Activated CD4-positive, alpha-beta memory T cell treated with anti-CD3 and anti-CD28 coated beads for 36 hours (primary cell): ENCODE measurements at regions of chr11 and their contacts with region 1.

Region 1: GRCh38 chr11:85854557-85855340 is 434 bp upstream of the CCDC83 start:
- DNase-seq: peak; percentile 96
- H3K4me3 Mint-ChIP-seq: peak overlapping the region; percentile 86
- H3K27ac Mint-ChIP-seq: peak overlapping the region; percentile 87
- H3K4me1 Mint-ChIP-seq: peaks cover 10% of the 10 kb centered on the region
- H3K27me3 Mint-ChIP-seq: no peaks in the 10 kb centered on the region

Region 2: DNA sequence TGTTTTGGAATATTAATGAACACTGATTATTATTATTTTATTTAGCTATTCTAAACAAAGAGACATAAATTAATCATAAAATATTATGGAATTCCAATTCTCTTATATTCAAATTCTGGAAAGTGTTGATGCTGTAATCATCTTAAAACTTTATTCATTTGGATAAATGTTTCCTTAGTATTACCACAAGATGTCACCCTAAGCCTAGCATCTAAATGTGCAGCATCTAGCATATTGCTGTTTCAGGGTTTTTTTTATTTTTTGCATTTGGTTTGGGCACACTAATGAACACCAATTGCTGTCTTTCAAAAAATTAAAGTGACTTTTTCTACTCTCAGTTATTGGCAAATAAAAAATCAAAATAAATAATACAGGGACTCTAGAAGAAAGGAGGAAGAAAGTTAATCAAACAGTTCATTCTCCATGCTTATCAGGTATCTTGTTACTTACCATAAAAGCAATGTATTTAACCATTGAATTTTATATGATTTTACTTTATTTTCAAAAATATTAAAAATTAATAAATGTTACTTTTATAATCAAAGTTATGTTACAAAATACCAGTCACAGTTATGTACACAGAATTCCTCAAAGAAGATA is 259.4 kb before region 1 on chr11:
- CTCF ChIA-PET with region 1: interaction called, 6 read pairs
- POLR2A ChIA-PET with region 1: no interaction called
- intact Hi-C with region 1: loop called (anchors 1 kb)
- DNase-seq: no peak
- H3K4me3 Mint-ChIP-seq: no peak overlapping the region
- H3K27ac Mint-ChIP-seq: no peak overlapping the region
- H3K4me1 Mint-ChIP-seq: no peaks in the 10 kb centered on the region
- H3K27me3 Mint-ChIP-seq: no peaks in the 10 kb centered on the region

Region 3: GRCh38 chr11:85826116-85826855 is 28.5 kb before region 1 on chr11:
- CTCF ChIA-PET with region 1: interaction called, 15 read pairs
- POLR2A ChIA-PET with region 1: no interaction called
- intact Hi-C with region 1: no loop called
- DNase-seq: peak; percentile 41
- H3K4me3 Mint-ChIP-seq: no peak overlapping the region
- H3K27ac Mint-ChIP-seq: peak overlapping the region; percentile 9
- H3K4me1 Mint-ChIP-seq: peaks cover 71% of the 10 kb centered on the region
- H3K27me3 Mint-ChIP-seq: no peaks in the 10 kb centered on the region

Region 4: GRCh38 chr11:85961930-85962363 is 107.2 kb after region 1 on chr11:
- CTCF ChIA-PET with region 1: interaction called, 11 read pairs
- POLR2A ChIA-PET with region 1: no interaction called
- intact Hi-C with region 1: no loop called
- DNase-seq: no peak
- H3K4me3 Mint-ChIP-seq: no peak overlapping the region
- H3K27ac Mint-ChIP-seq: no peak overlapping the region
- H3K4me1 Mint-ChIP-seq: peaks cover 11% of the 10 kb centered on the region
- H3K27me3 Mint-ChIP-seq: no peaks in the 10 kb centered on the region

Region 5: GRCh38 chr11:86418917-86419316 is 564.2 kb after region 1 on chr11:
- CTCF ChIA-PET with region 1: no interaction called
- POLR2A ChIA-PET with region 1: no interaction called
- intact Hi-C with region 1: loop called (anchors 10 kb)
- DNase-seq: peak; percentile 12
- H3K4me3 Mint-ChIP-seq: no peak overlapping the region
- H3K27ac Mint-ChIP-seq: no peak overlapping the region
- H3K4me1 Mint-ChIP-seq: peaks cover 6% of the 10 kb centered on the region
- H3K27me3 Mint-ChIP-seq: no peaks in the 10 kb centered on the region

Region 6: DNA sequence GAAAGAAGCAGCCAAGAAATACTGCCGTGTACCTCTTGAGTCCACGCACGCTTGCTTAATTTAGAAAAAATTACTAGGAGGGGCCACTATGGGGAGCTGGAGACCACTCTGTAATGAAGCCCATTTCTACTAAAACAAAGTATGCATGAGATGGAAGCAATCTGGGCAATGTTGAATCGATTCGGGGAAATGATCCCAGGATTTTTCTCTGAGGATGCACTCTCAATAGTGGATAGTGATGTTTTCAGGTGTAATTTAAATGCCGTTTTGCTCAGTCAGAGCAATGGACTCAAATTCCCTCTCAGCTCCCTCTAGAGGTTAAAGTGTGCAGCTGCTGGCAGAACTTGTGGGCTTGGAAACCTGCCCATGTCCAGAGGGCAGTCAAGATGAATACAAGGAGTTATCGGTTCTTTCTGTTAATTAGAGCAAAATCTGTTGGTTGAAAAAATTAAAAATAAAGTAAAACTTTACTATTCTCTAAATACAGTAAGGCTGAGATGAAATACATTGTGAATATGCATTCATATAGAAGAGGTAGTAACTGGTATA is 753.6 kb after region 1 on chr11:
- CTCF ChIA-PET with region 1: interaction called, 14 read pairs
- POLR2A ChIA-PET with region 1: interaction called, 3 read pairs
- intact Hi-C with region 1: loop called (anchors 2 kb)
- DNase-seq: peak; percentile 59
- H3K4me3 Mint-ChIP-seq: no peak overlapping the region
- H3K27ac Mint-ChIP-seq: no peak overlapping the region
- H3K4me1 Mint-ChIP-seq: peaks cover 10% of the 10 kb centered on the region
- H3K27me3 Mint-ChIP-seq: peaks cover 2% of the 10 kb centered on the region